Activated naive CD4-positive, alpha-beta T cell treated with anti-CD3 and anti-CD28 coated beads for 36 hours (primary cell): ENCODE measurements at regions of chr3 and their contacts with region 1.

Region 1: GRCh38 chr3:32960404-32961170 is 9.1 kb downstream of the CCR4 start:
- DNase-seq: no peak
- H3K4me3 Mint-ChIP-seq: no peak overlapping the region
- H3K27ac Mint-ChIP-seq: peak overlapping the region; percentile 75
- H3K4me1 Mint-ChIP-seq: peaks cover 61% of the 10 kb centered on the region
- H3K27me3 Mint-ChIP-seq: no peaks in the 10 kb centered on the region

Region 2: DNA sequence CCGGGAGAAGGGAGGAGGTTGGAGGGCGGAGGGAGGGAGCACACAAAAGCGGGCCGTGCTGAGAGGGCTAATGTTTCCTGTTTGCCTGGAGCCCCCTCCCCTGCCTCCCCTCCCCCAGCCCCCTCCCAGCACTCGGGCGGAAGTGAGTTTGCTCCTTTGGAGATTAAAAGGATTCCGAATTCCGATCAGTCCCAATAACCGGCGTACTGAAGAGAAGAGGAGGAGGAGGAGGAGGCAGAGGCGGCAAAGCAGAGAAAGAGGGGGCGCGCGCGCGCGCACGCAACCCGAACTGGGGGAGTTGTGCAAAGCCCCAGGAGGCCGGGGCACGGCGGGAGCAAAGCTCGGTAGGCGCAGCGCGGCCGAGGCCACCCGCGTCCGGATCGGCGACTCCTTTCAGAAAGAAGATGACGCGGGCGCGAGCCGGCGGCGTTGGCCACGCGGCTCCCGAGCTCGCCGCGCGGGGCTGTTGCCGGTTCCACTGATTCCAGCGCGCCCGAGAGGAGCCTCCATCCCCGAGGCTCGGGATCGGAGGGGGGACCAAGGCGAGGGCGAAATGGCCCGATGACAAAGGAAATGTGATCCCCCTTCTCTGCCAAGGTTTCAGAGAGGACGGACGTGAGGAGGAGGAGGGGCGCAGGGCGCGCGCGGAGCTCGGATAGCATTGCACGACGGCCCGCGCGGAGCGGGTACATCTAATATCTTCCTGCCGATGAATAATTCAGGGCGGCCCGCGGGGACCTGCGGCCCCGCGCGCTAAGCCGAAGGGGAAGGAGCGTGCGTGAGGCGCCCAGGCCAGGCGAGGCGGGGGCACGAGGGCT is 143.9 kb before region 1 on chr3:
- CTCF ChIA-PET with region 1: no interaction called
- intact Hi-C with region 1: no loop called
- DNase-seq: peak; percentile 22
- H3K4me3 Mint-ChIP-seq: peak overlapping the region; percentile 69
- H3K27ac Mint-ChIP-seq: no peak overlapping the region
- H3K4me1 Mint-ChIP-seq: peaks cover 27% of the 10 kb centered on the region
- H3K27me3 Mint-ChIP-seq: peaks cover 53% of the 10 kb centered on the region

Region 3: DNA sequence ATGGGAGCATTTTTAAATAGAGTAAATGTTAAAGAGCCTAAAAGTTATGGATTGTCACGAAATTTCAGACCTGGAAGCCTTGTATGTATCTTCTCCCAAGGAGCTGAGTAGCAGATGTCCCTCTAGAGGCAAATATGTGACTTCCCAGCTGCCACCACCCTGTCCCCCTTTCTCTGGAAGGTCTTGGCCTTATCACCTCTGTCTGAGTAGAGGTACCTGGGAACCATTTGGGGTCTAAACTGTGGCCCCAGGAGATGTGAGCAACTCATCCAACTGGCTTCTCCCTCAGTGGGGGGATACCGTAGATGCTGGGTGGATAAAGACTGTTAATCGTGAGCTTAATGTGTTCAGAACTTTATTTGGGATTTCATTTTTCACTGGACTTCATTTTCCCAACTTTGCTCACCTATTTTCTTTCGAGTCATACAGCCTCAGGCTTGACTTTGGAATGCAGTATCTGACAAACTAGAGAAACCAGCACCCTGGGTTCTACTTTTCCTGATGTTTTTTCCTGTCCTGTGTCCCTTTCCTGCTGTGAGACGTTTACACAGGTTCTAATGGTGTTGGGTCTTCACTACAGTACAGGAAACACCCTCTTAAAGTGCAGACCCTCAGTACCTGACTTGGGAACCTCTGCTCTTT is 62.5 kb before region 1 on chr3:
- CTCF ChIA-PET with region 1: no interaction called
- intact Hi-C with region 1: no loop called
- DNase-seq: no peak
- H3K4me3 Mint-ChIP-seq: no peak overlapping the region
- H3K27ac Mint-ChIP-seq: no peak overlapping the region
- H3K4me1 Mint-ChIP-seq: peaks cover 2% of the 10 kb centered on the region
- H3K27me3 Mint-ChIP-seq: peaks cover 18% of the 10 kb centered on the region

Region 4: DNA sequence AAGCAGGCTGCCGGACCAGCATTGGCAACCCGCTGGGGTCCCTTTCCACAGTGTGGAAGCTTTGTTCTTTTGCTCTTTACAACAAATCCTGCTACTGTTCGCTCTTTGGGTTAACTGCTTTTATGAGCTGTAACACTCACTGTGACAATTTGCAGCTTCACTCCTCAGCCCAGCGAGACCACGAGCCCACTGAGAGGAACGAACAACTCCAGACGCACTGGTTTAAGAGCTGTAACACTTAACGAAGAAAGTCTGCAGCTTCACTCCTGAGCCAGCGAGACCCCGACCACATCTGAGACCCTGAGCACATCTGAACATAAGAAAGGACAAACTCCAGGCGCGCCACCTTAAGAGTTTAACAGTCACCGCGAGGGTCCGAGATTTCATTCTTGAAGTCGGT is 19.9 kb before region 1 on chr3:
- CTCF ChIA-PET with region 1: no interaction called
- intact Hi-C with region 1: no loop called
- DNase-seq: no peak
- H3K4me3 Mint-ChIP-seq: no peak overlapping the region
- H3K27ac Mint-ChIP-seq: no peak overlapping the region
- H3K4me1 Mint-ChIP-seq: no peaks in the 10 kb centered on the region
- H3K27me3 Mint-ChIP-seq: no peaks in the 10 kb centered on the region

Region 5: GRCh38 chr3:32973982-32974381 is 13.4 kb after region 1 on chr3:
- CTCF ChIA-PET with region 1: interaction called, 6 read pairs
- intact Hi-C with region 1: loop called (anchors 1 kb)
- DNase-seq: peak; percentile 49
- H3K4me3 Mint-ChIP-seq: no peak overlapping the region
- H3K27ac Mint-ChIP-seq: no peak overlapping the region
- H3K4me1 Mint-ChIP-seq: peaks cover 10% of the 10 kb centered on the region
- H3K27me3 Mint-ChIP-seq: no peaks in the 10 kb centered on the region

Region 6: GRCh38 chr3:33023172-33024136 is 62.9 kb after region 1 on chr3:
- CTCF ChIA-PET with region 1: no interaction called
- intact Hi-C with region 1: loop called (anchors 1 kb)
- DNase-seq: no peak
- H3K4me3 Mint-ChIP-seq: peak overlapping the region; percentile 32
- H3K27ac Mint-ChIP-seq: peak overlapping the region; percentile 81
- H3K4me1 Mint-ChIP-seq: peaks cover 46% of the 10 kb centered on the region
- H3K27me3 Mint-ChIP-seq: no peaks in the 10 kb centered on the region

Region 7: GRCh38 chr3:33111581-33111980 is 151.0 kb after region 1 on chr3:
- CTCF ChIA-PET with region 1: no interaction called
- intact Hi-C with region 1: no loop called
- DNase-seq: peak; percentile 13
- H3K4me3 Mint-ChIP-seq: no peak overlapping the region
- H3K27ac Mint-ChIP-seq: no peak overlapping the region
- H3K4me1 Mint-ChIP-seq: peaks cover 33% of the 10 kb centered on the region
- H3K27me3 Mint-ChIP-seq: no peaks in the 10 kb centered on the region